ENCODE measurements at regions of chr1 and their contacts with region 1.

Region 1: DNA sequence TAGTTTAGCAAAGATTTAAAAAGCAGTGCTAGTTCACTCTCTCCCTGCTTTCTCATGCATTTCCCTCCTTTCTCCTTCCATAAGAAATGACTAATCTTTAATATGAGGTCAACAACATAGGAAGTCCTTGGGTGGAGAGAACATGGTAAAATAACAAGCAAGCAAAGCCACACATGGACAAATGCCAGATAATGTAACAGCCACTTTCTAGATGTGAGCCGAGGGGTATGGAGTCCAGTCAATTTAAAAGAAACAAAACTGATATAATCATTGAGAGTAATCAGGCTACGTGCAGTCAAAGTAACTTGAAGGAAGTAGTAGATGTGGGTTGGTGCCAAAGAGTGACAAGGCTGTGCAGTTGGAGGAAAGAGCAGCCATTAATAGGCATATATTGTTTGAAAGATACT is 69.6 kb downstream of the DUSP10 start:
- DNase-seq: peak; percentile 75
- H3K4me3 ChIP-seq: no peak overlapping the region
- H3K27ac ChIP-seq: no peak overlapping the region
- H3K4me1 ChIP-seq: peaks cover 44% of the 10 kb centered on the region
- H3K27me3 ChIP-seq: no peaks in the 10 kb centered on the region
- CTCF ChIP-seq: no peak

Region 2: GRCh38 chr1:221712198-221712684 is 40.0 kb after region 1 on chr1:
- CTCF ChIA-PET with region 1: no interaction called
- dilution Hi-C with region 1: loop called (anchors 5 kb)
- in situ Hi-C with region 1: no loop called
- intact Hi-C with region 1: no loop called
- DNase-seq: peak; percentile 90
- H3K4me3 ChIP-seq: no peak overlapping the region
- H3K27ac ChIP-seq: peak overlapping the region; percentile 76
- H3K4me1 ChIP-seq: peaks cover 46% of the 10 kb centered on the region
- H3K27me3 ChIP-seq: no peaks in the 10 kb centered on the region
- CTCF ChIP-seq: no peak

Region 3: GRCh38 chr1:221816899-221817298 is 144.7 kb after region 1 on chr1:
- CTCF ChIA-PET with region 1: no interaction called
- dilution Hi-C with region 1: no loop called
- in situ Hi-C with region 1: no loop called
- intact Hi-C with region 1: no loop called
- DNase-seq: peak; percentile 95
- H3K4me3 ChIP-seq: no peak overlapping the region
- H3K27ac ChIP-seq: peak overlapping the region; percentile 57
- H3K4me1 ChIP-seq: peaks cover 16% of the 10 kb centered on the region
- H3K27me3 ChIP-seq: no peaks in the 10 kb centered on the region
- CTCF ChIP-seq: no peak